Endothelial cell of umbilical vein (primary cell): ENCODE measurements at regions of chr12 and their contacts with region 1.

Region 1: DNA sequence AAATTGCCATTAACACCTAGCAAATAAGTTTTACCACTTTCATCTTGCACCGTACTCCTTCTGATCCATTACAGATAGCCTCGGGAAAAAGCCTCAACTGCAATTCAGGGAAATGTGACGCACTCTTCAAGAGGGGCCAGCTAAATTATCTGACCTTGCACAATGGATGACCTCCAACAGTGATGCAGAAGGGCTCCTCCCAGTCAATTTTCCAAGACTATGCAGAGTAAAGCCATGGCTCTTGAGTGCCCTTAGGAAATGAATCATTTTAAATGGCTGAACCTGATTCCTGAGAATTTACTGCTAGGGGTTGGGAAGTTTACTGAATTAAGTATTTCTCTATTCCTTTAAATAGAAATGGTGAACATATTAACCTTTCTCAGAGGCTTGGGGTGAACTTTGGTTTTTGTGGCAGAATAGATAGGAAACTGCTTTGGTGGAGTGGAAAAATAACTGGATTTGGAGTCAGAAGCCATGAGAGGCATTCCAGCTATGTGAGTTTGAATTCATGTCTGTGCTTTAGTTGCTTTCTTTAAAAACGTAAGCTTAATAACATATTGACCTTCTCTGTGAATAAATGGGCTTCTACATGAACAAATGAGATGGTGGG is 64.8 kb upstream of the OVCH1 start:
- DNase-seq: peak; percentile 96
- H3K4me3 ChIP-seq: peak overlapping the region in 1 of 3 experiments; percentile 20
- H3K27ac ChIP-seq: peak overlapping the region; percentile 52
- H3K4me1 ChIP-seq: peaks cover 25% of the 10 kb centered on the region
- H3K27me3 ChIP-seq: no peaks in the 10 kb centered on the region
- CTCF ChIP-seq: no peak
- POLR2A ChIP-seq: no peak

Region 2: DNA sequence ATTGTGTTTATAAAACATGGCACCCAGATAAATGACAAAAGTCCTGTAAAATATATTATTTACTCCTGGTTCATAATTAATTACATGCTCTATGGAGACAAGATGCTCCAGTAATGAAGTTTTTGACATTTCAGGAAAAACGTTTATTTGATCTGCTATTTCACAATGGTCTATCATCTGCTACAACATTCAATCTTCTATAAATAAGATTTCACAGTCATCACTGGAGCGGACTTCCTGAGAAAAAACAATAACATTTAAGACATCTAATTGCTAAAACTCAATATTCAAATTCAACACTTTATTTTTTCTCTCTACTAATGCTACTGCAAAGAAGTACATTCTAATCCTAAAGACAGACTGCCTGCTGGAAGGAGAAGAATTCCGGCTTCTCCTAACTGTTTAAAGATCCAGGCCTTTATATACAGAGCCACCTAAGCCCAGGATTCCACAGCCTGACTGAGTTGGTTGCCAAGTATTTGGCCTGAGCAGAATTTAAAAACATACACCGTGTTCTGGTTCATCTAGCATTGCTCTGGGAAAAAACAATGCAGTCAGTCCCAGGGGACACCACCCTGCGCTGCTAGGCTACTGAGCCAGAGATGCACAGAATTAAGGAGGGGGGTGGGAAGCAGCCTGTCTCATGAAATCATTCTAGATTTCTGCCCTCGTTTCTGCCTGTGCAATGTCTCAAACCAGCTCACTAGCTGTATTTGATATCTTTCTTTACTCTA is 163.5 kb after region 1 on chr12:
- CTCF ChIA-PET with region 1: no interaction called
- POLR2A ChIA-PET with region 1: no interaction called
- dilution Hi-C with region 1: no loop called
- intact Hi-C with region 1: loop called (anchors 2 kb)
- DNase-seq: peak; percentile 84
- H3K4me3 ChIP-seq: no peak overlapping the region
- H3K27ac ChIP-seq: peak overlapping the region; percentile 54
- H3K4me1 ChIP-seq: peaks cover 17% of the 10 kb centered on the region
- H3K27me3 ChIP-seq: no peaks in the 10 kb centered on the region
- CTCF ChIP-seq: no peak
- POLR2A ChIP-seq: no peak

Region 3: DNA sequence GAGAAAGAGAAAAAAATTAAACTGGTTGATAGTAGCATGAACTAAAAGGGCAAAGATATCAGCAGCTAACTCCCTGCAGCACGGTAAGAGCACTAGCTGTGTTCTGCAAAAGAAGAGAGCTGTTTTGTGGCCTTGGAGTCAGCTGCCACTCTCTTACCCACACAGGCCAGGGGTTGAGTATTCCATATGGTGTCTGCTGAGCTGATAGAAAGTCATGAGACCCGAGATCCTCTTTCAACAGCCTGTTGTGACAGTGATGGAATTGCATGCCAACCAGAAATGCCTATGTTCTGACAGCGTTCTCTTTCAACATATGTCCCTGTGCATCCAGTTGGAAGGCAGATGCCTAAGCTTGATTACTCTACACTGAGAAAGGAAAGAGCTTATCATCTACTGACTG is 181.5 kb after region 1 on chr12:
- CTCF ChIA-PET with region 1: no interaction called
- POLR2A ChIA-PET with region 1: no interaction called
- dilution Hi-C with region 1: no loop called
- intact Hi-C with region 1: loop called (anchors 5 kb)
- DNase-seq: peak; percentile 39
- H3K4me3 ChIP-seq: no peak overlapping the region
- H3K27ac ChIP-seq: no peak overlapping the region
- H3K4me1 ChIP-seq: peaks cover 19% of the 10 kb centered on the region
- H3K27me3 ChIP-seq: no peaks in the 10 kb centered on the region
- CTCF ChIP-seq: no peak
- POLR2A ChIP-seq: no peak

Region 4: GRCh38 chr12:30082381-30082780 is 520.1 kb after region 1 on chr12:
- CTCF ChIA-PET with region 1: no interaction called
- POLR2A ChIA-PET with region 1: no interaction called
- dilution Hi-C with region 1: no loop called
- intact Hi-C with region 1: no loop called
- DNase-seq: no peak
- H3K4me3 ChIP-seq: no peak overlapping the region
- H3K27ac ChIP-seq: no peak overlapping the region
- H3K4me1 ChIP-seq: no peaks in the 10 kb centered on the region
- H3K27me3 ChIP-seq: no peaks in the 10 kb centered on the region
- CTCF ChIP-seq: no peak
- POLR2A ChIP-seq: no peak

Region 5: DNA sequence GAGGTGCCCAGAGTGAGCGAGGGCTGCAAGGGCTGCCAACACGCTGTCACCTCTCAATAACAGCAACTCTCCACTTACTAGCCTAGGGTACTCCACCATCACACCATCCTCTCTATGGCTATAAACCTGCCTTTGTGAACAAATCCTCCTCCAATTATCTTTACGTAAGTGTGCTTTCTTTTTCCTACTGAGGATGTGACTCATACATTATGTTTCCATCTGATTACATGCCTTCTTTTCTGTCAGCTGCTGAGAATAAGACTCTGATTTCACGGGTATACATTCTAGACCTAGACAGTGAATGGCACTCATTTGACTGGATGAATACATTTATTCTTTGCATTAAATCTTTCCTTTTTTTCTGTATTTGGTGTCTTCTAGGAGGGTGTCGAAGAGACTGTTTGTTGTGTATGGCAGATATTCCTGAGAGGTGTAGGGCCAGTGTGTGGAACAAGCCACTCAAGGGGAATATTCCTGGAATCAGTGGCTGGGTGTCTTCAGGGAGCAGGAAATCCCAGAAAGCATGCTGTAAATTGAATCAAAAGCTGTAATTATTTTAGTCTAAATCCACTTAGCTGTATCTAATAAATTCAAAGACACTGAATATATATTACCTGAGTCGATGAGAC is 548.8 kb after region 1 on chr12:
- CTCF ChIA-PET with region 1: no interaction called
- POLR2A ChIA-PET with region 1: no interaction called
- dilution Hi-C with region 1: no loop called
- intact Hi-C with region 1: loop called (anchors 10 kb)
- DNase-seq: peak; percentile 93
- H3K4me3 ChIP-seq: no peak overlapping the region
- H3K27ac ChIP-seq: peak overlapping the region; percentile 60
- H3K4me1 ChIP-seq: peaks cover 6% of the 10 kb centered on the region
- H3K27me3 ChIP-seq: no peaks in the 10 kb centered on the region
- CTCF ChIP-seq: no peak
- POLR2A ChIP-seq: no peak